K562 (cell line): ENCODE measurements at regions of chr16 and their contacts with region 1.

Region 1: DNA sequence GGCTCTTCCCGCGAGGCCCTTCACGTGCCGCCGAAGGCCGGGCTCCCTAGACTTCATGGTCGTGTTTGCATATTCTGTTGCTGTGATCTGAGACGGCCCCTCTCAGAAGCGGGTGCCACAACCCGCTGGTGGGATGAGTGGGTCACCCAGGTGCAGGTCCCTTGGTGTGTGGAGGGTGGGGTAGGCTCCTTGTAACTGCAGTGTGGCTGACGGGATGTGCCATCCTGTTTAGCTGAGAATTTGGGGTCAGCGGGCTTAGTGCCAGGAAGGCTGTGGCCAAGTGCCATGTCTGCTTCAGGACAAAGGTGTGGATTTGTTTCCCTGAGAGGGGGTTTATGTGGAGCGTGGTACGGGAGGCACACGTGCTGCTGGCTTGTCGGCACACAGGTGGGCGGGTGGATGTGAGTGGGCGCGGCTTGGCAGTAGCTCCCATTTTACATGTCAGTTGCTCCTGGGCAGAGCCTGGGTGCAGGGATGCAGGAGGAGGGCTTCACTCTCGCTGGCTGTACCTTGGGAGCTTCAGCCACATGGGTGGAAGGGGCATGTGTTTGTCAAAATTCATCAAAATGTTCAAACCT is 9.2 kb upstream of the WFIKKN1 start:
- DNase-seq: no peak
- ATAC-seq: no peak
- H3K4me3 ChIP-seq: 0 out of 2 replicates have a peak overlapping the region, but pooled peaks have one; percentile 24
- H3K27ac ChIP-seq: peak overlapping the region; percentile 71; the same call in 2 of the 3 replicates
- H3K4me1 ChIP-seq: peaks cover 21 to 71% of the 10 kb centered on the region in 2 experiments
- H3K27me3 ChIP-seq: no peaks in the 10 kb centered on the region
- CTCF ChIP-seq: no peak
- EP300 ChIP-seq: no peak
- POLR2A ChIP-seq: no peak
- RAD21 ChIP-seq: no peak

Region 2: DNA sequence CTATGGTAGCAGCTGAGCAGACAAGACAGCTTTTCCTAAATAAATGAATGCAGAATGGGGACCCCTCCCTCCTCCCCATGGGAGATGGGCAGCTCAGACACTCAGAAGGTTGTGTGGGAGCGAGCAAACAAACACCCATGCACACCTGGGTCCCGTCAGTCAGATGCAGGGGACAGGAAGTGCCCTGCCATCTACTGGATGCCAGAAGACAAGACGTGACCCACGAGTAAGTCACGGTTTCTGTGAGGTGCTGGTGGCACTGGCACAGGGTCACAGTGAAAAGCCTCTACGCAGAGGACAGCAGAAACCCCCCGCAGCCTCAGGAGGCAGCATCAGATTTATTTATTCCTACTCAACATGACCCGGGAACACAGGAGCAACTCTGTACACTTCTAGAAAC is 432.9 kb before region 1 on chr16:
- CTCF ChIA-PET with region 1: no interaction called
- POLR2A ChIA-PET with region 1: no interaction called
- in situ Hi-C with region 1: no loop called
- intact Hi-C with region 1: no loop called
- DNase-seq: peak in 1 of 4 experiments; percentile 21
- ATAC-seq: no peak
- H3K4me3 ChIP-seq: no peak overlapping the region
- H3K27ac ChIP-seq: no peak overlapping the region
- H3K4me1 ChIP-seq: peaks cover 0 to 19% of the 10 kb centered on the region in 2 experiments; a peak in 2 of 5 replicates
- H3K27me3 ChIP-seq: no peaks in the 10 kb centered on the region
- CTCF ChIP-seq: peak in 2 of 3 experiments; percentile 20 to 27; a peak in 1 of 6 replicates
- EP300 ChIP-seq: no peak
- POLR2A ChIP-seq: no peak
- RAD21 ChIP-seq: no peak

Region 3: DNA sequence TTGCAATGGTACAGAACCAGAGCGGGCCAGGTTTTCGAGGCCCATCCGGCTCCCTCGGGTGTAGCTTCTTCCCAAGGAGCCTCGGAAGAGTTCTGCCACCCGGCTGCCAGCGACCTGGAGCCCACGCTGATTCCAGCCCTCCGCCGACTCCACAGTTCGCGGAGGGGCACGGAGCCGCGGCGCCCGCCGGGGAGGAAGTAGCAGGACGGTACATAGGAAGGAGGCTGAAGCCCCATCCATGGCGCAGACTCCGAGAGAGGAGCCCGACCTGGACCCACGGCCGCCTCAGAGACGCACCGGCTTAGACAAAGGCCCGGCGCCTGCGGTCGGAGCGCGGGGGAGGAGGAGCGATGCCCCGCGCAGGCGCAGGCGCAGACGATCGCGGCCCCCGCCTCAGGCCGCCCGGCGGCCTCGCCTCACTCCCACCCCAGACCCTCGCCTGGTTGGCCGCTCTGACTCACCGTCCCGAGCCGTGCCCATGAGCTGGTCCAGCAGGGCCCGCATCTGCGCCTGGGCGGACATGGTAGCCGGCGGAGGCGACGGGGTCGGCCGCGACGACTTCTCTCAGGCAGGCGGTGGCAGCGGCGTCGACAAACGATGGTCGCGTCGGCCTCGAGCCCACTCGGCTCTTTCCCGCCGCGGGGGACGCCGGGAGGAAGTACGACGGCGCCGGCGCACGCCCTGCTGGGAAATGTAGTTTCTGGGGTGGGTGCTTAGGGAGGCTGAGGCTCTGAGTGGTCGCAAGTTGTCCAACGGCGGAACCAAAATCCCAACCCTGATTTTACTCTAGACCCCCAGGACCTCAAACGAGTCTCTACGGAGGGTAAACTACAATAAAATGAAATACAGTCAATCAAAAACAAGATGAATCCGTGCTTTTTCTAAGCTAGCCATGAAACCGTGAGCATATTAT is 392.5 kb before region 1 on chr16 and contains the start of gene LUC7L:
- CTCF ChIA-PET with region 1: no interaction called
- POLR2A ChIA-PET with region 1: no interaction called
- in situ Hi-C with region 1: no loop called
- intact Hi-C with region 1: no loop called
- DNase-seq: peak; percentile 93 to 97 (median 95)
- ATAC-seq: peak; percentile 97
- H3K4me3 ChIP-seq: peak within 1 kb of the TSS; percentile 79
- H3K27ac ChIP-seq: peak within 1 kb of the TSS; percentile 92
- H3K4me1 ChIP-seq: peaks cover 6 to 25% of the 10 kb centered on the region in 2 experiments; a peak in 4 of 5 replicates
- H3K27me3 ChIP-seq: no peaks in the 10 kb centered on the region
- CTCF ChIP-seq: no peak
- EP300 ChIP-seq: no peak
- POLR2A ChIP-seq: peak; percentile 98
- RAD21 ChIP-seq: peak in 1 of 2 experiments; percentile 9; a peak in 1 of 4 replicates
- polyA plus RNA-seq, gene LUC7L: 1.7 to 5.4 TPM

Region 4: DNA sequence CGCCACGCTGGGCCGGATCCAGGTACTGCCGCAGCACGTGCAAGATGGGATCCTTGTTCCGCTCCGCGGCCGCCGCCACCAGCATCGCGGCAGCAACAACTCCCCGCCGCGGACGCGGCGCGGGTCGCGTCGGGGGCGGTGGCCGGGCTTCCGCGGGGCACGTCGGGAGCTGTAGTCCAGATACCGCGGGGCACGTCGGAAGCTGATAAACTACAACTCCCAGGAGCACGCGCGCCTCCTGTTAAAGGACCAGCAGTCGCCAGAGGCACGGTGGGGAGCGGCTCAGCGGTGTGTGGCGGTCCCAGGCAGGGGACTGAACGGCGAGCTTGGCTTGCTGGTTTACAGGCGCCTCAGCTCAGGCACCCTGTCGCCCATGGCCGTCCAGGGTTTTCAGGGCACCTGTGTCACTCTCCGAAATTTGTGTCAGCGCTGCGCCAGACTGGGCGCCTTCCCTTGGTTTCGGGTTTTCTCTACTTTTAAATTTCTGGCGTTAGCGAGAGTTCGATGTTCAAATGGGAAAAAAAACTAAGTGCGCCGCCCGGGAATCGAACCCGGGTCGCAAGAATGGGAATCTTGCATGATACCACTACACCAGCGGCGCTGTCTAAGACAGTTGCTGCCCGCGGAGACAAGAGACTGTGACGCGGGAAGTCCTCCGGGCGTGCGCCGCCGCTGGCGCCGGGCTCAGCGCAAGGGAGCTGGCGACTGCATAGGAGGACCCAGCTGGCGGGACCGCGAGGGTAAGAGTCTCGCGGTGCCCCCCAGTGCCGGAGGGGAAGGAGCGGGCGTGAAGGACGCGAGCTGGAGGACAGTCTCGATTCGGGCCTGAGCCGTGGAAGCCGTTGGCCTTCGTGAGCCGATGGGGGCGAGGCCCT is 14.8 kb after region 1 on chr16 and contains the start of gene METTL26:
- CTCF ChIA-PET with region 1: no interaction called
- POLR2A ChIA-PET with region 1: interaction called, 8 read pairs
- in situ Hi-C with region 1: no loop called
- intact Hi-C with region 1: loop called (anchors 2 kb)
- DNase-seq: peak; percentile 78 to 97 (median 86)
- ATAC-seq: peak; percentile 87
- H3K4me3 ChIP-seq: peak within 1 kb of the TSS; percentile 87
- H3K27ac ChIP-seq: peak within 1 kb of the TSS; percentile 93
- H3K4me1 ChIP-seq: peaks cover 14 to 83% of the 10 kb centered on the region in 2 experiments; a peak in 4 of 5 replicates
- H3K27me3 ChIP-seq: no peaks in the 10 kb centered on the region
- CTCF ChIP-seq: peak in 2 of 3 experiments; percentile 46 to 68; a peak in 4 of 6 replicates
- EP300 ChIP-seq: peak; percentile 69
- POLR2A ChIP-seq: peak; percentile 69
- RAD21 ChIP-seq: peak; percentile 9 to 41; a peak in 2 of 4 replicates
- polyA plus RNA-seq, gene METTL26: 7.3 to 11.6 TPM